Breast epithelium (tissue), 4 donors: ENCODE measurements at regions of chr20 and their contacts with region 1.

Region 1: GRCh38 chr20:58416835-58417234 is 27.8 kb downstream of the VAPB start:
- DNase-seq: no peak
- H3K4me3 ChIP-seq: no peak overlapping the region
- H3K27ac ChIP-seq: no peak overlapping the region
- H3K4me1 ChIP-seq: no peaks in the 10 kb centered on the region
- H3K27me3 ChIP-seq: no peaks in the 10 kb centered on the region
- CTCF ChIP-seq: no peak
- POLR2A ChIP-seq: no peak

Region 2: DNA sequence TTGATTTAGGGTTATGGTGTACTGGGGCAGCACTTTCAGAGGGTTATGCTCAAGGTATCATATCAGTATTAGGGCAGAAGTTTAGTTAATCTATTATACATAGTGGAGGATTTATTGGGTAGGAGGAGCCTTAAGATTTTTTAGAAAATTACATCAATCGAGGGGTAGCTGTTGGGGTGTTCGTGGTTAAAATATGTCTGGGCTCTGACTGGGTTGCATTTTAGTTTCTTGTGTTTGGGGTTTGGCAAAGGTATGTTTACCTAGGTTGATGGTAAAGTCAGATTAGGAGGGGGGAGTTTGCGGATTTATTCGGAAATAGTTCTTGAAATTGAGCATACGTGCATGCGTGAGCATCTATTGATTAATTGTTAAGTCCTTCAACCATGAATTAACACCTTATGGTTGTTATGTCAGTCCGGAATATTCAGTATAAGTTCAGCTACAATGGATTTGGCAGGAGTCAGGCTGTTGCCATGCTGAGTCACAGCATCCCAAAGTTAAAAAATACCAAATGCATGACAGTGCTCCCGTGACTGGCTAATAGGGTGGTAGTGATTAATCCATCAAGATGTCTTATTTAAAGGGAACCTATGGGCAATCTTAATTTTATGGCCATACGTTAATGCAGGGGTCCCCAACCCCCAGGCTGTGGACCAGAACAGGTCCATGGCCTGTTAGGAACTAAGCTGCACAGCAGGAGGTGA is 1055.5 kb before region 1 on chr20:
- intact Hi-C with region 1: loop called (anchors 5 kb)
- DNase-seq: no peak
- H3K4me3 ChIP-seq: no peak overlapping the region
- H3K27ac ChIP-seq: no peak overlapping the region
- H3K4me1 ChIP-seq: no peaks in the 10 kb centered on the region
- H3K27me3 ChIP-seq: no peaks in the 10 kb centered on the region
- CTCF ChIP-seq: no peak
- POLR2A ChIP-seq: no peak